Activated B cell treated with CpG ODN at 0.5 μM for 24 hours (primary cell): ENCODE measurements at regions of chr2 and their contacts with region 1.

Region 1: GRCh38 chr2:60550178-60550983 is 3.1 kb downstream of the BCL11A start:
- DNase-seq: peak; percentile 68
- ATAC-seq: peak; percentile 56
- H3K4me3 Mint-ChIP-seq: peak overlapping the region; percentile 96
- H3K27ac Mint-ChIP-seq: peak overlapping the region; percentile 98
- H3K4me1 Mint-ChIP-seq: peaks cover 41% of the 10 kb centered on the region
- H3K27me3 Mint-ChIP-seq: no peaks in the 10 kb centered on the region
- CTCF ChIP-seq: peak; percentile 32

Region 2: DNA sequence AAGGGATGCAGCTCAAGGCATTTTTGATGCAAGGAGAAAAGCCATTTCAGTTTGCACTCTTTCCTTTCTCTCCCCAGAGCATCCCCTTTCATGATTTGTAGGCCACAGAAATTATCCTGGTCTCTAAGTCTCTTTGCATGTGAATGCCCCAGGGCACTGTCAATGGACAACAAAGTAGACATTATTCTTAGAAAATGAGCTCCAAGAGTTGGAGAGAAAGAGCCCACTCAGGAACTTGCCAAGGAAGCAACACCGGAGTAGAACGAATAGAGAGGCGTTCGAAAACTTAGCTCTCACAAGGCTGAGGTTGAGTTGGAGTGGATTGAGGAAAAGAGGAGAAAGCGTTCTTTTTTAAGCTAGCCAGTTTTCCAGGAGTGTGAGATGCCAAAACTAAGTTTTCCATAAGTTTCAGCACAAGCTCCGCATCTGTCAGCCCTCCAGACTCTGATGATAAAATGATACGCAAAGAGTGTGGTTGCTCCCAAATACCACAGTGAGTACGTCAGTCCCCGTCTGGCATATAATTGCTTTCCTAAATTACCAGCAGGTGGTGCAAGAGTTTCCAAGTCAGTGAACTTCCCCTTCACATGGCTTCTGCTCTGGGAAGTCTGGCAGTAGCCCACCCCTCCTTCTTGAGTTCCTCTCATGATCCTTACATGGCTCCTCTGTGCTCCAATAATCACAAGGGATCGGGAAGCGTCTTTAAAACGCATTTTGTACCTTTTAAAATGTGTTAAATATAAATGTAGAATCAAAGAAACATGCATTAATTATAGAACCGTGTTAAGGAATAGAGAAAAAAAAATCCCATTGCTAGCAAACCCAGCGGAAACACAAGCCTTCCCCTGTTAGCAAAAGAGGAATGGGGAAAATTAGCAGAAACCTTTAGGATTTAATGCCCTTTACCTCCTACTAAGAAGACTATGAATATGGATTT is 1248.6 kb before region 1 on chr2:
- CTCF ChIA-PET with region 1: interaction called, 21 read pairs
- POLR2A ChIA-PET with region 1: no interaction called
- intact Hi-C with region 1: loop called (anchors 1 kb)
- DNase-seq: no peak
- ATAC-seq: peak; percentile 67
- H3K4me3 Mint-ChIP-seq: no peak overlapping the region
- H3K27ac Mint-ChIP-seq: no peak overlapping the region
- H3K4me1 Mint-ChIP-seq: no peaks in the 10 kb centered on the region
- H3K27me3 Mint-ChIP-seq: peaks cover 2% of the 10 kb centered on the region
- CTCF ChIP-seq: no peak

Region 3: GRCh38 chr2:60002158-60002867 is 548.1 kb before region 1 on chr2:
- CTCF ChIA-PET with region 1: interaction called, 6 read pairs
- POLR2A ChIA-PET with region 1: interaction called, 4 read pairs
- intact Hi-C with region 1: loop called (anchors 1 kb)
- DNase-seq: no peak
- ATAC-seq: no peak
- H3K4me3 Mint-ChIP-seq: no peak overlapping the region
- H3K27ac Mint-ChIP-seq: no peak overlapping the region
- H3K4me1 Mint-ChIP-seq: peaks cover 21% of the 10 kb centered on the region
- H3K27me3 Mint-ChIP-seq: no peaks in the 10 kb centered on the region
- CTCF ChIP-seq: no peak

Region 4: DNA sequence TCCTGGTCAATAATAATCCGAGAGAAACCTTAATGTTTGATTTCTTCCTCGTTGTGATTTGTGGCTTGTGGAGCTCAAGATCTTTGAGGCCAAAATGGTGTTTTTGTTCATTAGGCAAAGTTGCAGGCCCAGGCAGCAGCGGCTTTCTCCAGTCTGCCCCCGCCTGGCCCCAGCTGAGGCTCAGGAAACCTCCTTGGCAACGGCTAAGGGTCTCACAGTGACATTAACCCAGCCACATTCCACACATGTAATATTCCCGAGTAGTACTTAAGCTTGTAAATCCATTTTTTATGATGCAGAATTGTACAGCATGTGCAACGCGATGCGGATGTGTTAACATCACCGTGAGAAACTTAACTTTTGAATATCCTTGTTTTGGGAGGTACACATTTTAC is 197.0 kb before region 1 on chr2:
- CTCF ChIA-PET with region 1: interaction called, 11 read pairs
- POLR2A ChIA-PET with region 1: interaction called, 223 read pairs
- intact Hi-C with region 1: loop called (anchors 1 kb)
- DNase-seq: no peak
- ATAC-seq: peak; percentile 5
- H3K4me3 Mint-ChIP-seq: peak overlapping the region; percentile 52
- H3K27ac Mint-ChIP-seq: peak overlapping the region; percentile 97
- H3K4me1 Mint-ChIP-seq: peaks cover 100% of the 10 kb centered on the region
- H3K27me3 Mint-ChIP-seq: no peaks in the 10 kb centered on the region
- CTCF ChIP-seq: no peak

Region 5: GRCh38 chr2:60484133-60484645 is 66.2 kb before region 1 on chr2:
- CTCF ChIA-PET with region 1: interaction called, 6 read pairs
- POLR2A ChIA-PET with region 1: interaction called, 14 read pairs
- intact Hi-C with region 1: loop called (anchors 1 kb)
- DNase-seq: no peak
- ATAC-seq: peak; percentile 66
- H3K4me3 Mint-ChIP-seq: peak overlapping the region; percentile 78
- H3K27ac Mint-ChIP-seq: peak overlapping the region; percentile 93
- H3K4me1 Mint-ChIP-seq: peaks cover 96% of the 10 kb centered on the region
- H3K27me3 Mint-ChIP-seq: no peaks in the 10 kb centered on the region
- CTCF ChIP-seq: no peak

Region 6: DNA sequence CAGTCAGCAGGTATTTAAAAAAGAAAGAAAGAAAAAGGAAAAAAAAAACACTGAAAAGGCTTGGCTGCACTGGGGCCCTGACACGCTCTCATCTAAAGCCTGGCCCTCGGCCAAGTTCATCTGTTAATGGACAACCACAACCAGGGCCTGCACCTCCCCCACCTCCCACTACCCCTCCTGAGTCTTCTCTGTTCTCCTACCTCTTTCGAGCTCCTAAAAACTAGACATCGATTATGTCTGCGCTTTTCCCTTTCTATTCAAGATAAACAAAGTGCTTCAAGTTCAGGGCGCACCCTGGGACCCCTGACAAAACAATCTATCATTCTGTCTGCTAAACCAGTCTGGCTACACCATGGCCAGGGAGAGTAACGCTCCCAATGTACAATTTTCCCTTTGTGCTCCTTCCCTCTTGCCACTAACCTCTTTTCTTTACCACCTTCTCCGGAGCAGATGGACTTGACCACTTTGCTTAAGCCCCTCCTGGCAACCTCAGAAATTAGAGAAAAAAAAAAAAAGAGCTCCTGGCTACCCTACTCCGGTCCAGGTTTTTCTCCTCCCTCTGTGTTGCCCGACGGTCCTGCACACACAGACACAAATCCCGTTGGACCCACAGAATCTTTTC is 19.6 kb before region 1 on chr2:
- CTCF ChIA-PET with region 1: interaction called, 7 read pairs
- POLR2A ChIA-PET with region 1: interaction called, 54 read pairs
- intact Hi-C with region 1: no loop called
- DNase-seq: no peak
- ATAC-seq: peak; percentile 49
- H3K4me3 Mint-ChIP-seq: peak overlapping the region; percentile 81
- H3K27ac Mint-ChIP-seq: peak overlapping the region; percentile 84
- H3K4me1 Mint-ChIP-seq: peaks cover 100% of the 10 kb centered on the region
- H3K27me3 Mint-ChIP-seq: no peaks in the 10 kb centered on the region
- CTCF ChIP-seq: no peak

Region 7: GRCh38 chr2:60597346-60597745 is 47.0 kb after region 1 on chr2:
- CTCF ChIA-PET with region 1: no interaction called
- POLR2A ChIA-PET with region 1: no interaction called
- intact Hi-C with region 1: no loop called
- DNase-seq: no peak
- ATAC-seq: no peak
- H3K4me3 Mint-ChIP-seq: no peak overlapping the region
- H3K27ac Mint-ChIP-seq: no peak overlapping the region
- H3K4me1 Mint-ChIP-seq: peaks cover 7% of the 10 kb centered on the region
- H3K27me3 Mint-ChIP-seq: peaks cover 14% of the 10 kb centered on the region
- CTCF ChIP-seq: no peak

Region 8: GRCh38 chr2:61538200-61538919 is 988.0 kb after region 1 on chr2 and contains the start of gene XPO1:
- CTCF ChIA-PET with region 1: no interaction called
- POLR2A ChIA-PET with region 1: interaction called, 4 read pairs
- intact Hi-C with region 1: loop called (anchors 5 kb)
- DNase-seq: peak; percentile 96
- ATAC-seq: peak; percentile 77
- H3K4me3 Mint-ChIP-seq: peak within 1 kb of the TSS; percentile 90
- H3K27ac Mint-ChIP-seq: peak within 1 kb of the TSS; percentile 100
- H3K4me1 Mint-ChIP-seq: peaks cover 39% of the 10 kb centered on the region
- H3K27me3 Mint-ChIP-seq: no peaks in the 10 kb centered on the region
- CTCF ChIP-seq: no peak
- total RNA-seq, gene XPO1: 183 and 217 TPM in 2 replicates